Activated CD4-positive, alpha-beta T cell treated with anti-CD3 and anti-CD28 coated beads, Interleukin-2, amount 10 ng/mL, durations not matched to agents 24 days and 14 days (primary cell): ENCODE measurements at regions of chr1 and their contacts with region 1.

Region 1: DNA sequence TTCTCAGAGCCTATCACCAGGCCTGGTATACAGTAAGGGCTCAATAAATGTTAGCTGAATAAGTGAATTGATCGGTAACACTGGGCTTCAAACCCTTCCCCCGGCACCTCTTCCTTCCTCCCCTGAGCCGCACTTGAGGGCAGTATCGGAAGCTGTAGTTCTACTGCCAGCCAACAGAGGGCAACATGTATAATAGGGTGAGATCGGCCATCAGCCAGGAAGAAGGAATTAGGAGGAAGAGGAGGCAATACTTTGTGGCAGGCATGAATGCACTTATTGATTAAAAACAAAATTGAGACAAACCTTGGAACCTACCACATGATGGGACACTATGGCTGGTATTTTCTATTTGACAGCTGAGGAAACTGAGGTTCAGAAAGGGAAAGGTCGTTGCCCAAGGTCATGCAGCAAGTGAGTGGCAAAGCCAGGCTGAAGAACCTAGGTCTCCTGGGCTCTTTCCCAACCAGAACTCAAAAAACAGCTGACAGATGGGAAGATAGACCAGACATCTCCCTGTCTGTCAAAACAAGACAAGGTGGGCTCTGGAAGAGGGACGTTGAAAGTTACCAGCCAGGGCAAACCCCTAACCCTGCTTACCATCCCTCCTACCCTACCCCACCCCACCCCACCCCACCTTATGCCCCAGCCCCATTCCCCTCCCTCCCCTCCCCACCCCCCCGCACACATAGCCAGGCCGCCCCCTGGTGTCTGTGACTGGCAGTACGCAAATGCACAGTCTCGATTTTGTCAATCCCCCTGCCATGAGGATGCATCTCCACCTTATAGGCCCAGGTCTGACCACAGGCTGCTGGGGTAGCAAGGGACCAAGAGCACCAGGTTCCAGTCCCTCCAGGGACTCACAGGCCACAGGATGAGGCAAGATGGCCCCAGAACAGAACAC is 107.3 kb upstream of the RUNX3 start:
- DNase-seq: peak; percentile 90
- H3K4me3 Mint-ChIP-seq: peak overlapping the region; percentile 47
- H3K27ac Mint-ChIP-seq: peak overlapping the region; percentile 64
- H3K4me1 Mint-ChIP-seq: peaks cover 42% of the 10 kb centered on the region
- H3K27me3 Mint-ChIP-seq: peaks cover 9% of the 10 kb centered on the region

Region 2: GRCh38 chr1:24923485-24924113 is 113.8 kb before region 1 on chr1:
- intact Hi-C with region 1: loop called (anchors 1 kb)
- DNase-seq: no peak
- H3K4me3 Mint-ChIP-seq: peak overlapping the region; percentile 23
- H3K27ac Mint-ChIP-seq: peak overlapping the region; percentile 78
- H3K4me1 Mint-ChIP-seq: peaks cover 67% of the 10 kb centered on the region
- H3K27me3 Mint-ChIP-seq: peaks cover 2% of the 10 kb centered on the region

Region 3: DNA sequence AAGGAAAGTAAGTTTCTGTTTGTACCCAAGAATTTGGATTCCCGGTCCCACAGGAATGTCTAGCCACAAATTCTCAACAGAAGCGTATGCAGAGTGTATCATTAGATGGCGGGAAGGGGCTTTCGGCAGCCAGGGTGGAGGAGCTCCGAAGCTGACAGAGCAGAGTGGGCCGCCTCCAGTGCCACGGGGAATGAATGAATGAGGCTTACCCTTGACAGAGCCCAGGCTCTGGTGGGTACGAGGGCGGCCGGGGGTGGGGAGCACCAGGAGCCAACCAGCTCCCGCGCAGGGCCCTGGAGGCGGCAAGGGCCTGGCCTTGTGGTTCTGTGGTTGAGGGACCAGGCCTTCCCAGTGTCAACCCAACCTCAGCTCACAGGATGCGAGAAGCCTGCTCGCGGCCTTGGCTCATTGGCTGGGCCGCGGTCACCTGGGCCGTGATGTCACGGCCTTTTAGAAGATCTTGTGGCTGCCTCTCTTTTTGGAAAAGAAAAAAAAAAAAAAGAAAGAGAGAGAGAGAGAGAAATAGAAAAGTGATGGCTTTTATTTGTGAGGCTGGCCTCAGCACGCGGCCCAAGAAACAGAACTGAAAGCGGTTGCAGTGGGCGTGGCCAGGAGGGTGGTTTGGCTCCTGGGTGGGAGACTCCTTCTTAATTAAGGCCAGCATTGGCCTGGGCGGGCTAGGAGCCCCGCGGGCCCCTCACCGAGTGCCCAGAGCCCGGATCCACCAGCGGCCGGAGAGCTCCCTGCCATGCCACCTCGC is 72.4 kb before region 1 on chr1:
- intact Hi-C with region 1: loop called (anchors 1 kb)
- DNase-seq: peak; percentile 98
- H3K4me3 Mint-ChIP-seq: peak overlapping the region; percentile 96
- H3K27ac Mint-ChIP-seq: peak overlapping the region; percentile 97
- H3K4me1 Mint-ChIP-seq: peaks cover 71% of the 10 kb centered on the region
- H3K27me3 Mint-ChIP-seq: no peaks in the 10 kb centered on the region

Region 4: DNA sequence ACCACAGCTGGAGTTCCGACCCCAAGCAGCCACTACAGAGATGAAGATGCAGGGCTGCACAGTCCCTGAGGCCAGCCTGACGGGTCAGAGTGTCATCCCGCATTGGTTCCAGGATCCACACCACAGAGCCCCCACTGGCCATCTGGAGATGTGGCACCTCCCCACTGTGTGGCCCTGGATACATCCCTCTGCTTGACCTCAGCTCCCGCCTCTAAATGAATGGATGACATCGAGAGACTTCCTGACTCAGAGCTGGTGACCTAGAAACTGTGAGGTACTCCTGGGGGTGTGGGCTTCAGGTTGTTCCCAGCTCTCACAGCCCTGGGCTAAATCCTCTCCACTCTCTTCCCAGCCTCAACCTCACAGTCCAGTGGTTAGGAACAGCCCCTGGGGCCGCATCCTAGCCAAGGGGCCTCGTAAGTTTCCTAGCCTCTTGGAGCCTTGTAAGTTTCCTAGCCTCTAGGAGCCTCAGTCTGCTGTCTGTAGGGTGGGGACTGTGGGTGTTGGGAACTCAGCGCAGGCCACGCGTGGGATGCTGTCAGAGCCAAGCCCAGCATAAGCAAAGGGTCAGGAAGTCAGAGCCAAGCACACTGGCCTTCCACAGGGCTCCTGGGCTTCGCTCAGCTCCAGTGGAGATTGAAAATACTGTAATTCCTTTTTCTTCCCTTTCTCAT is 19.9 kb before region 1 on chr1:
- intact Hi-C with region 1: no loop called
- DNase-seq: peak; percentile 67
- H3K4me3 Mint-ChIP-seq: peak overlapping the region; percentile 32
- H3K27ac Mint-ChIP-seq: peak overlapping the region; percentile 77
- H3K4me1 Mint-ChIP-seq: peaks cover 54% of the 10 kb centered on the region
- H3K27me3 Mint-ChIP-seq: no peaks in the 10 kb centered on the region

Region 5: GRCh38 chr1:25174730-25175612 is 137.5 kb after region 1 on chr1:
- intact Hi-C with region 1: no loop called
- DNase-seq: no peak
- H3K4me3 Mint-ChIP-seq: no peak overlapping the region
- H3K27ac Mint-ChIP-seq: no peak overlapping the region
- H3K4me1 Mint-ChIP-seq: no peaks in the 10 kb centered on the region
- H3K27me3 Mint-ChIP-seq: peaks cover 8% of the 10 kb centered on the region